Prostate gland (tissue), 2 donors: ENCODE measurements at regions of chr13 and their contacts with region 1.

Region 1: GRCh38 chr13:110715395-110716235 is 2.1 kb downstream of the ING1 start:
- DNase-seq: peak; percentile 99
- H3K4me3 ChIP-seq: peak overlapping the region; percentile 93 to 99
- H3K27ac ChIP-seq: peak overlapping the region; percentile 100
- H3K4me1 ChIP-seq: peaks cover 5% of the 10 kb centered on the region
- H3K27me3 ChIP-seq: no peaks in the 10 kb centered on the region
- CTCF ChIP-seq: peak in 2 of 4 experiments; percentile 13 to 30
- POLR2A ChIP-seq: peak; percentile 98

Region 2: DNA sequence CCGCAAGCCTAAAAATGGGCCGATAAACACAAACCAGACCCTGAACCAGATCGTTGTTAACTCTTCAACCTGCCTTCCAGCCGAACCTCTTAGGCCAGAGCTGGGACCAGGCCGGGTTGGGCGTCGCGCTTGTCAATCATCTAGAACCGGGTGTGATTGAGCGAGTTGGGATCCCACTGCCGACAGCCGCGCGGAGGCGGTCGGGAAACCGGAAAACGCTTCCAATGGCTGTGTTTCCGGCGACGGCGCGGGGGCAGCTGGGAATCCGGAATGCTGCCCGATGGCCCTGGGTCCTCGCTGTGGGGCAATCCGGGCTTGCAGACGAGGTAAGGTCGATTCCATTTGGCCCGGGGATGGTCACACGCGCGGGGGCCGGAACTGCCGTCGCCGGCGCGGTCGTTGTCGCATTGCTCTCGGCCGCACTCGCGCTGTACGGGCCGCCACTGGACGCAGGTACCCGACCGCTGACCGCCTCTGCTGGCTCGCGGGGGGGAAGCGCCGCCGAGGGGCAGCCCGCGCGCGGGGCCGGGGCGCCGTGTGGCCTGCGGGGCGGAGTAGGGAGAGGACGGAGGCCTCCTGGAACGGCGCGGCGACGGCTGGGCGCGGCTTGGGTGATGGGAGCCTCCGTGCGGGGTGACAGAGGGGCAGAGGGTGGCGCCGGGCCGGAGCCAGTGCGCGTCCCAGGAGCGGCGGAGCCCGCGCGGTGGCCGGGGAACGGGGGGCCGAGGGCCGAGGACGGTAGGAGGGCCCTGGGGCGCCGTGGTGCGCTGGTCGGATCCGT is 100.1 kb before region 1 on chr13 and contains the start of gene NAXD:
- intact Hi-C with region 1: loop called (anchors 5 kb)
- DNase-seq: peak; percentile 85
- H3K4me3 ChIP-seq: peak within 1 kb of the TSS; percentile 92 to 96
- H3K27ac ChIP-seq: peak within 1 kb of the TSS; percentile 86 to 90
- H3K4me1 ChIP-seq: peaks cover 14% of the 10 kb centered on the region
- H3K27me3 ChIP-seq: no peaks in the 10 kb centered on the region
- CTCF ChIP-seq: peak in 2 of 4 experiments; percentile 20 to 21
- POLR2A ChIP-seq: peak; percentile 58
- total RNA-seq, gene NAXD: 36.2 to 71.6 TPM

Region 3: DNA sequence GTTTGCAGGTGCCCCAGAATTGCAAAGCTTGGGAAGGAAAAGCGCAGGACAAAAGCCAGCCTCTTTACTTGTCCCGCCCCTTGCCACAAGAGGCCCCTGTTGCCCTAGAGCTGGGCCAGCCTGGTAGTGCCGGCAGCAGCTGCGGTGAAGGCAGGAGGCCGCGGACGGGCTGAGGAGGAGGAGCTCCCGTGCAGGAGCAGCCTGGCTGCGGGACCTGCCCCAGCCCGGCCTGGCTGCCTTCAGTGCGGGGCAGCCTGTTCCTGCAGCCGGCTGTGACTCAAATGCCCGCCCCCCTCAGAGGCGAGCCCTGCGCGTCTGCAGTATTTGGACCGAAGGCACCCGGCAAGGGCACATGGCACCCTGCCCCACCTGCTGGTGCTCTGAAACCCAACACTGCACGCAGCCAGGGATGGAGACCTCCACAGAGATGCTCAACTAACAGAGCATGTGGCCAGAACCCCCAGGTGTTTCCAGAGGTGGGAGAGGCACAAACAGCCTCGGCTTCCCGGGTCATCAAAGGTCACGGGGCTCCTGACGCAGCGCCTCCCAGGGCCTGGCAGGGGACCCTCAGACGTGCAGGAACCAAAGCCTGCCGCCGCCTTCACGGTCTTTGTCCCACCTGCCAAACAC is 70.6 kb before region 1 on chr13:
- intact Hi-C with region 1: loop called (anchors 10 kb)
- DNase-seq: peak; percentile 35
- H3K4me3 ChIP-seq: no peak overlapping the region
- H3K27ac ChIP-seq: no peak overlapping the region
- H3K4me1 ChIP-seq: peaks cover 6% of the 10 kb centered on the region
- H3K27me3 ChIP-seq: no peaks in the 10 kb centered on the region
- CTCF ChIP-seq: peak in 3 of 4 experiments; percentile 26 to 59 (median 54)
- POLR2A ChIP-seq: no peak

Region 4: GRCh38 chr13:110819203-110820014 is 103.8 kb after region 1 on chr13:
- intact Hi-C with region 1: loop called (anchors 2 kb)
- DNase-seq: peak; percentile 67
- H3K4me3 ChIP-seq: no peak overlapping the region
- H3K27ac ChIP-seq: no peak overlapping the region
- H3K4me1 ChIP-seq: no peaks in the 10 kb centered on the region
- H3K27me3 ChIP-seq: no peaks in the 10 kb centered on the region
- CTCF ChIP-seq: peak; percentile 95 to 96 (median 96)
- POLR2A ChIP-seq: no peak

Region 5: DNA sequence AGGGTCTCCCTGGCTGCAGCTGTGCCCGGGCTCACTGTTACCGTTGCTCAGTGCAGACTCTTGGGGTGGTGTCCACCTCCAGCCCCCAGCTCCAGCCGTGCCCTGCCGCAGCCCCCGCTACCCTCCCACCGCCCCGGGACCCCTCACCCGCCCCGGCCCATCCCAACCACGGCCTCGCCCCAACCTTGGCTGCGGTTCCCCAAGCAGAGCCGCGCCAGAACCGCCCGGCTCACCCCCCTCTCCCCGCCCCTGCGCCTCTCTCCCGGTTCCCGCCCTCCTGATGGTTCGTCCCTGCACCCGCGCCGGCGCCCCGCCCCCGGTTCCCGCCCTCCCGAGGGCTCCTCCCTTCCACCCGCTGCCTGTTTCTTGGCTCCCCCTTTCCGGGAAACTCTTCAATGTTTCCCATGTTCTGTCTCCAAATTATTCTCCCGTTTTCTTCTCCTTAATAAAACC is 158.9 kb after region 1 on chr13:
- intact Hi-C with region 1: loop called (anchors 5 kb)
- DNase-seq: peak; percentile 77
- H3K4me3 ChIP-seq: peak overlapping the region; percentile 18 to 33
- H3K27ac ChIP-seq: no peak overlapping the region
- H3K4me1 ChIP-seq: no peaks in the 10 kb centered on the region
- H3K27me3 ChIP-seq: no peaks in the 10 kb centered on the region
- CTCF ChIP-seq: no peak
- POLR2A ChIP-seq: no peak

Region 6: GRCh38 chr13:110925023-110925612 is 209.5 kb after region 1 on chr13:
- intact Hi-C with region 1: no loop called
- DNase-seq: no peak
- H3K4me3 ChIP-seq: no peak overlapping the region
- H3K27ac ChIP-seq: no peak overlapping the region
- H3K4me1 ChIP-seq: peaks cover 4% of the 10 kb centered on the region
- H3K27me3 ChIP-seq: no peaks in the 10 kb centered on the region
- CTCF ChIP-seq: peak in 1 of 4 experiments; percentile 2
- POLR2A ChIP-seq: no peak